Heart right ventricle (tissue), 16 donors: ENCODE measurements at regions of chr5 and their contacts with region 1.

Region 1: DNA sequence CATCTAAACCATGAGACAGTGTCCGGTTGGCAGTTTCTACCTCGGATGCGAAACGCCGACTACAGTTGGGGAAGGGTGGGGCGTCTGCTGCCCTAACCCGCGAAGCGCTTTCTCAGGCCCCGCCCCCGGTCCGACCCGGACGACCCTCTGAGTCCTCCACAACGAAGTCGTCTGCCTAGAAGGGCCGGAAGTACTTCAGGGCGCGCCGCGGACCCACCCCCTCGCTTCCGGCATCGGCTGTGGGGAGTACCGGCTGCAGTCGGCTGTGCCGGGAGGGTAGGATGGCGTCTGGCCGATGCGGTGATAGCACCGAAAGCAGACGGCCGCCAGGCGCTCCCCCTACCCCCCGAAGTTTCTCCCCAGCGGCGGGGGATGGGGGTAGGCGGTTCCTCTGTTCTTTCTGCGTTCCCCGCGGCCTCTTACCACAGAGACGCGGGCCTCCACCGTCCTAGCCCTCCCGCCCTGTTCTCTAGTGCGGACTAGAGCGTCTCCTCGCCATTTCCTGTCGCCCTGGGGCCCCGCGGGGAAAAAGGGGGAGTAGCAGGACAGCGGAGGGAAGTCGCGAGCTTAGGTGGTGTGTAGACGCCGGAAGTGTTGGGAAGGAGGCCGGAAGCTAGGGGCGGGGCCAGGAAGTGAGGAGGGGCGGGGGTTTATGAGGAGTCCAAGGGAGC is at the start of gene TRIM41:
- DNase-seq: peak; percentile 99
- ATAC-seq: peak; percentile 85 to 94 (median 92)
- H3K4me3 ChIP-seq: peak within 1 kb of the TSS; percentile 53 to 96 (median 84)
- H3K27ac ChIP-seq: peak within 1 kb of the TSS; percentile 84 to 99 (median 96)
- H3K4me1 ChIP-seq: peaks cover 0 to 42% (median 11%) of the 10 kb centered on the region in 9 donors
- H3K27me3 ChIP-seq: no peaks in the 10 kb centered on the region
- CTCF ChIP-seq: peak in 5 of 9 donors; percentile 22 to 42 (median 30)
- total RNA-seq, gene TRIM41: 17.3 to 28.2 (median 26.0) TPM

Region 2: DNA sequence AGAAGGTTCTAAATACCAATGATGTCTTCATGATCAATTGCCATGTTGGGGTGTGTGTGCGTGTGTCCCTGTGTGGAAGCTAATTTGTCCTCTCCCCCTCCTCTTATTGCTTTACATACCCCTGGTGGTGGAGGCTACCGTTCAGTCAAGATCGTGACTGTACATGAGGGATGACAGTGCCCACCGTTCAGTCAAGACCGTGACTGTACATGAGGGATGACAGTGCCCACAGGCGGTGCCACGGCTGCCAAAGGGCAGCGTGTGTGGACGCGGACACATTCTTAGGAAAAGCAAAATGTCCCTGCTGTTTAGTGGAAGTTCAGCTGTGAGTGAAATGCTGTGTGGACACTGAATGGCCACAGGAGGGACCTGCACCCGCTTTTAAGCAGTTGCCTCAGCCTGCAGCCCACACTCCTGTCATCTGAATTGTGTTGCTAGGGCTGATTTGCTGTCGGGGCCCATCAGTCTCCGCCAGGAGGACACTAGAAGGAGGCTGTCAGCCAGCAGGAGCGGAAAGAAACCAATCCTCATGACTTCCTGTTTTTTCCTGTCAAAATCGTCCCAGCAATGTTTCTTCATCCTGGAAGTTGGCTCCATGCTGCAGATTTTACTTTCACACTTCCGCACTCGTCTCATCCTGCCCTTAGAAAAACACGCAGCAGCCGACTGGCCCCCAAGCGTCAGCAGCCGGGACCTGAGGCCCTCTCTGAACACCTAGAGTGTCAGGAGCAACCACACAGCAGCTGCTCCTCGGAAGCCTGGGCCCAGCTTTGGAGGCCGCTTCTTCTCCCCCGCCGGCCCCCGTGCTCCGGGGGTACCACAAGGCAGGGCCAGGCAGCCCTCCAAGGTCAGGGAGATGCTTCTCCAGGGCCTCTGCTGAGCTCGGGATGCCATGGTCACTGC is 101.3 kb before region 1 on chr5:
- intact Hi-C with region 1: no loop called
- DNase-seq: no peak
- ATAC-seq: peak in 4 of 8 donors; percentile 12 to 54 (median 40)
- H3K4me3 ChIP-seq: no peak overlapping the region
- H3K27ac ChIP-seq: no peak overlapping the region
- H3K4me1 ChIP-seq: peaks cover 0 to 7% (median 0%) of the 10 kb centered on the region in 9 donors
- H3K27me3 ChIP-seq: peaks cover 0 to 70% (median 49%) of the 10 kb centered on the region in 7 donors
- CTCF ChIP-seq: peak in 2 of 9 donors; percentile 9 to 10

Region 3: DNA sequence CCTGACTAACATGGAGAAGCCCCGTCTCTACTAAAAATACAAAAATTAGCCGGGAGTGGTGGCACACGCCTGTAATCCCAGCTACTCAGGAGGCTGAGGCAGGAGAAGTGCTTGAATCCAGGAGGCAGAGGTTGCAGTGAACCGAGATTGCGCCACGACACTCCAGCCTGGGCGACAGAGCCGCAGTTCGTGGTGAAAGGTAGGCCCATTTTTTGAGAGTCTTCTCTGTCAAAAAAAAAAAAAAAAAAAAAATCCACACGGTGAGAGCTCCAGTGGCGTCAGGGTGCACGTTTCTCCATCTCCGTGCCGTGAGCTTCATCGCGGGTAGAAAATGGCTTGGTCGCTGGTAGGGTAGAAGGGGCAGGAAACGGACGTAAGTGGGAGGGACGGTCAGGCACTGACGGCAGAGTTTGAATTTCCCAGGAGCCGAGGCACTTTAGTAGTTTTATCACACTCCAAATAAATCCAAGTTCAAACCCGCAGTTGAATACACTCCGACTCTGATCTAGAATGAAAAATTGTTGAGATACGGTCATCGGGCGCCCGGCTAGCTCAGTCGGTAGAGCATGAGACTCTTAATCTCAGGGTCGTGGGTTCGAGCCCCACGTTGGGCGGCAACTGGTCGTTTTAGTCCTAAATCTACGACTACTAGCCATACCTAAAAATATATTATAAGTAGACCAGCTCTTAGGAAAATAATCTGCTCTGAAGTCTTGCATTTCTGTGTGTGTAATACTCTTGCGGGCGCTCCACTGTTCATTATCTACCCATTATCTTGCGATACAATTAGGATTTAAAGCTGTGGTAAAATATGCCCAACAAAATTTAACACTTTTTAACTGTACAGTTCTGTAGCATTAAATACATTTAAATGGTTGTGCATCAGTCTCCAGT is 15.7 kb before region 1 on chr5:
- intact Hi-C with region 1: loop called in 3 of 10 experiments (anchors 1 to 2 kb)
- DNase-seq: peak; percentile 78 to 80
- ATAC-seq: peak; percentile 35 to 73 (median 52)
- H3K4me3 ChIP-seq: peak overlapping the region; percentile 22 to 90 (median 74)
- H3K27ac ChIP-seq: peak overlapping the region in 9 of 10 donors; percentile 77 to 87 (median 82)
- H3K4me1 ChIP-seq: peaks cover 7 to 47% (median 37%) of the 10 kb centered on the region in 9 donors
- H3K27me3 ChIP-seq: peaks cover 0 to 28% (median 0%) of the 10 kb centered on the region in 7 donors
- CTCF ChIP-seq: no peak

Region 4: DNA sequence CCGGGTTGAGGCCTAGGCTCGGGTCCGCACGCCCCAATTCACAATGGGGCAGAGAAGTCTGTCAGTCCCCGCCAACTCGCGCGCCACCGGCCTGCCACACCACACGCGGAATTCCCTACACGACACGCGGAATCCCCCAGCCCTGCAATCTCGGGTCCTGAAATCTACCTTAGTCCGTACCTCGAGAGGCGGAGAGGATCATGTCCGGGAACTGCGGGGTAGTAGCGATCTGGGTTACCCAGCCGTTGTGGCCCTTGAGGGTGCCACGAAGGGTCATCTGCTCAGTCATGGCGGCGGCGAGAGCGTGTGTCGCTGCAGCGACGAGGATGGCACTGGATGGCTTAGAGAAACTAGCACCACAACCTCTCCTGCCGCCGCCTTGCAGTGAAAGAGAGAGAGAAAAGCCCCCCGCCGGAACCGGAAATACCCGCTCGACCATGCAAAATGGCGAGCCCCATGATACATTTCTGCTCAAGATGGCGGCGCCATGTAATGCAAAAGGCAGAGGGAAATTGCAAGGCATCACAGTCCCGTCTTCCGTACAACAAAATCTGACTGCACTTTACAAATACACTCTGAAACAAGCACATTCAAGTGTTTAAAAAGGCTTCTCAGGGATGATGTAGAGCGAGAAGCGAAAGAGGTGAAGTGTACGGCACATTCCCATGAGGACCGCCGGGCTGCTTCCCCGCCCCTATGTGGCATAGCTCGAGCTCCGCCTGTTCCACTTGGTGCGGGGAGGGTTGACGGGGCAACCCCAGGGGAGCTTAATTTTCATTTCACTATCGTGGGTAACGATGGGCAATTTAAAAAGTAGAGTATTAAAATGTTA is 20.5 kb after region 1 on chr5 and contains the start of gene RACK1:
- intact Hi-C with region 1: loop called in 5 of 10 experiments (anchors 1 kb)
- DNase-seq: peak; percentile 85 to 93
- ATAC-seq: peak; percentile 61 to 76 (median 70)
- H3K4me3 ChIP-seq: peak within 1 kb of the TSS; percentile 76 to 94 (median 80)
- H3K27ac ChIP-seq: peak within 1 kb of the TSS; percentile 66 to 99 (median 96)
- H3K4me1 ChIP-seq: peaks cover 23 to 77% (median 58%) of the 10 kb centered on the region in 9 donors
- H3K27me3 ChIP-seq: no peaks in the 10 kb centered on the region
- CTCF ChIP-seq: no peak
- total RNA-seq, gene RACK1: 581 to 916 (median 631) TPM

Region 5: GRCh38 chr5:181260387-181261319 is 37.5 kb after region 1 on chr5 and contains the start of gene TRIM52:
- intact Hi-C with region 1: loop called in 2 of 10 experiments (anchors 1 to 2 kb)
- DNase-seq: peak; percentile 93
- ATAC-seq: peak; percentile 90 to 97 (median 94)
- H3K4me3 ChIP-seq: peak within 1 kb of the TSS; percentile 73 to 99 (median 92)
- H3K27ac ChIP-seq: peak within 1 kb of the TSS; percentile 98 to 100 (median 100)
- H3K4me1 ChIP-seq: peaks cover 11 to 64% (median 51%) of the 10 kb centered on the region in 9 donors
- H3K27me3 ChIP-seq: no peaks in the 10 kb centered on the region
- CTCF ChIP-seq: peak in 1 of 9 donors; percentile 13
- total RNA-seq, gene TRIM52: 5.5 to 15.8 (median 7.5) TPM